WTC11 (cell line): ENCODE measurements at regions of chr11 and their contacts with region 1.

Region 1: DNA sequence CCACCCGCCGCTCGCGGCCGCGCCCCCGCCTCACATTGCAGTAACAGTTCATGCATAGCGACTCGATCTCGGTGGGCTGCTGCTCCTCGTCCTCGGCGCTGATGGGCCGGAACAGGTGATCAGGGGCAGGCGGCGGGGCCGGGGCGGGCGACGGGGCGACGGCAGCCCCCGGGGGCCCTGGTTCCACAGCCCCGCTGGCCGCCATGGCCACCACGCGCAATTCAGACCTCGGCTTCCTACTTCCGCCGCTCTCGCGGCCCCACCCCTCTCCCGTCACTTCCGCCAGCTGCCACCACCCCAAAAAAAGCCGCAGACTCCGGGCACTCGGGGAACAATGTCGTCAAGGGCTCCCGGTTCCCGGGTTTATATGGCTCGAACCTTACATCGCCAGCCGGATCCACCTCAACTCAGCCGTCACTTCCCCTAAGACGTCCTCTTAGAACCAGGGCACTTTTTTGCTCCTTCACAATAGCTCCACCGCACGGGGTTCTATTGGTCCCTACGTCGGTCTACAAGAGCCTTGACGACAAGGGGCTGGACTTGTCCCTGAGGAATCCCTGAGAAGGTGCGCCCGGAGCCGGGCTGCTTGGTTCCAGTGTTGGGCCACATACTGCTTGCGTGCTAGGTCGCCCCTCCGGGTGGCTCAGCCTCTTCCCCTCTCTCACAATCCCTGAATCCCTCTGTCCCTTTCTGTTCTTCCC is at the start of gene ZPR1:
- DNase-seq: peak; percentile 72
- ATAC-seq: peak; percentile 66
- H3K4me3 Mint-ChIP-seq: peak within 1 kb of the TSS; percentile 94
- H3K27ac Mint-ChIP-seq: peak within 1 kb of the TSS; percentile 61
- H3K4me1 Mint-ChIP-seq: peaks cover 22% of the 10 kb centered on the region
- H3K27me3 Mint-ChIP-seq: peaks cover 23% of the 10 kb centered on the region
- CTCF ChIP-seq: no peak
- total RNA-seq, gene ZPR1: 55.2 to 59.6 TPM (median 56.6 TPM) in 3 replicates

Region 2: DNA sequence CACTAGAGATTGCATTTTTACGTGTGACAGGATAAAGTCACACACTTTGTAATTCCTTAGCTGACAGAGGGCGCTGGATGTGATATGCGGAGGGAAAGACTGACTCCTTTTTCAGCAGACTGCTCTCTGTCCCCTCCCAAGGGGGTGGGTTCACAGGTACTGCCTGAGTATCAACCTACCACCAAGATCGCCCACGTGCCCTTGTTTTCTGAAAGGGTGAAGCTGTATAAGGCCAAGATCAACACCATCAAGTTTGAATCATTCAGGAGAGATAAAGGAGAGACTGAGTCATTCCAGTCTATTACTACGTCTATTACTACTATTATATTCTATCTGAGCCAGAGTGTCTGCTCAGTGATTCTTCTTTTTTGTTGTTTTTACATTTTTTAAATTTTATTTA is 45.8 kb before region 1 on chr11:
- CTCF ChIA-PET with region 1: interaction called, 10 read pairs
- POLR2A ChIA-PET with region 1: no interaction called
- DNase-seq: no peak
- ATAC-seq: peak; percentile 56
- H3K4me3 Mint-ChIP-seq: no peak overlapping the region
- H3K27ac Mint-ChIP-seq: peak overlapping the region; percentile 86
- H3K4me1 Mint-ChIP-seq: peaks cover 32% of the 10 kb centered on the region
- H3K27me3 Mint-ChIP-seq: no peaks in the 10 kb centered on the region
- CTCF ChIP-seq: no peak

Region 3: DNA sequence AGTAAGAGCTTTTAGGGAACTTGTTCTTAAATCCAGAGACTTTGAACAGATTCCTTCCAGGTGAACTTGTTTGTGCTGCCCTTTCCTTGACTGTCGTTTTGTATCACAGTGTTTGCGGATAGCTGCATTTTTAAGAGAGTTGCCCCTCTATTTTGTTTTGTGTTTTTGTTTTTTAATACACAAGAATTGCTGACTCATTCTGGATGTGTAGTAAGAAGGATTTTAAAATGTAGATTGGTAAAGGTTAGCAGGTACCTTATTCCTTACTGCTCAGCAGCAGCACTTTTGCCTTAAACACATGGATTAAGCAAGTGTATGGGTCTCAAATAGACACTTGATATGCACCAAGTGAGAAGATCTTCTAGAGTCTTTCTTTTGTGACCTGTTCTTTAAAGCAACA is 12.7 kb after region 1 on chr11:
- CTCF ChIA-PET with region 1: interaction called, 14 read pairs
- POLR2A ChIA-PET with region 1: no interaction called
- DNase-seq: no peak
- ATAC-seq: no peak
- H3K4me3 Mint-ChIP-seq: no peak overlapping the region
- H3K27ac Mint-ChIP-seq: no peak overlapping the region
- H3K4me1 Mint-ChIP-seq: no peaks in the 10 kb centered on the region
- H3K27me3 Mint-ChIP-seq: no peaks in the 10 kb centered on the region; the same call in 1 of the 2 replicates
- CTCF ChIP-seq: no peak

Region 4: GRCh38 chr11:116821050-116821918 is 33.3 kb after region 1 on chr11:
- CTCF ChIA-PET with region 1: interaction called, 21 read pairs
- POLR2A ChIA-PET with region 1: interaction called, 3 read pairs
- DNase-seq: no peak
- ATAC-seq: no peak
- H3K4me3 Mint-ChIP-seq: no peak overlapping the region
- H3K27ac Mint-ChIP-seq: no peak overlapping the region
- H3K4me1 Mint-ChIP-seq: no peaks in the 10 kb centered on the region
- H3K27me3 Mint-ChIP-seq: no peaks in the 10 kb centered on the region
- CTCF ChIP-seq: no peak

Region 5: DNA sequence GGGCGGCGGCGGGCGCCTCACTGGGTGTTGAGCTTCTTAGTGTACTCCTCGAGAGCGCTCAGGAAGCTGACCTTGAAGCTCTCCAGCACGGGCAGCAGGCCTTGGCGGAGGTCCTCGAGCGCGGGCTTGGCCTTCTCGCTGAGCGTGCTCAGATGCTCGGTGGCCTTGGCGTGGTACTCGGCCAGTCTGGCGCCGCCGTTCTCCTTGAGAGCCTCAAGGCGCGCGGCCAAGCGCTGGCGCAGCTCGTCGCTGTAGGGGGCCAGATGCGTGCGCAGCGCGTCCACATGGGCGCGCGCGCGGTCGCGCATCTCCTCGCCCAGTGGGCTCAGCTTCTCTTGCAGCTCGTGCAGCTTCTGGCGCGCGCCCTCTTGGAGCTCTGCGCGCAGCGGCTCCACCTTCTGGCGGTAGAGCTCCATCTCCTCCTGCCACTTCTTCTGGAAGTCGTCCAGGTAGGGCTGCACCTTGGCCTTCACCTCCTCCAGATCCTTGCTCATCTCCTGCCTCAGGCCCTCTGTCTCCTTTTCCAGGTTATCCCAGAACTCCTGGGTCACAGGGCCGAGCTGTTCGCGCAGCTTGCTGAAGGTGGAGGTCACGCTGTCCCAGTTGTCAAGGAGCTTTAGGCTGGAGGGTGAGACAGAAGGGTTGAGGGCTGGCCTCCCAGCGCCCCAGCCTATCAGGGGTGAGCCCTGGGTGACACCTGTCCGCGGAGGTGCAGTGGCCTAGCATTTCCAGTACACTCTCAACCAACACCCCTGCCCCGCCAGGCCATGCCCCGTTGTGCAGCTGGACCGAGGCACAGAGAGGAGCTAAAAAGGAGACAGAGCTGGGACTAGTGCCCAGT is 48.1 kb after region 1 on chr11:
- CTCF ChIA-PET with region 1: interaction called, 358 read pairs
- POLR2A ChIA-PET with region 1: interaction called, 8 read pairs
- DNase-seq: peak; percentile 88
- ATAC-seq: peak; percentile 83
- H3K4me3 Mint-ChIP-seq: peak overlapping the region; percentile 59
- H3K27ac Mint-ChIP-seq: no peak overlapping the region
- H3K4me1 Mint-ChIP-seq: peaks cover 19% of the 10 kb centered on the region
- H3K27me3 Mint-ChIP-seq: peaks cover 11% of the 10 kb centered on the region
- CTCF ChIP-seq: peak; percentile 12; the same call in 1 of the 2 replicates

Region 6: GRCh38 chr11:116946410-116946809 is 158.5 kb after region 1 on chr11:
- CTCF ChIA-PET with region 1: no interaction called
- POLR2A ChIA-PET with region 1: no interaction called
- DNase-seq: no peak
- ATAC-seq: no peak
- H3K4me3 Mint-ChIP-seq: no peak overlapping the region
- H3K27ac Mint-ChIP-seq: peak overlapping the region; percentile 38; the same call in 1 of the 2 replicates
- H3K4me1 Mint-ChIP-seq: peaks cover 10% of the 10 kb centered on the region
- H3K27me3 Mint-ChIP-seq: no peaks in the 10 kb centered on the region
- CTCF ChIP-seq: no peak

Region 7: DNA sequence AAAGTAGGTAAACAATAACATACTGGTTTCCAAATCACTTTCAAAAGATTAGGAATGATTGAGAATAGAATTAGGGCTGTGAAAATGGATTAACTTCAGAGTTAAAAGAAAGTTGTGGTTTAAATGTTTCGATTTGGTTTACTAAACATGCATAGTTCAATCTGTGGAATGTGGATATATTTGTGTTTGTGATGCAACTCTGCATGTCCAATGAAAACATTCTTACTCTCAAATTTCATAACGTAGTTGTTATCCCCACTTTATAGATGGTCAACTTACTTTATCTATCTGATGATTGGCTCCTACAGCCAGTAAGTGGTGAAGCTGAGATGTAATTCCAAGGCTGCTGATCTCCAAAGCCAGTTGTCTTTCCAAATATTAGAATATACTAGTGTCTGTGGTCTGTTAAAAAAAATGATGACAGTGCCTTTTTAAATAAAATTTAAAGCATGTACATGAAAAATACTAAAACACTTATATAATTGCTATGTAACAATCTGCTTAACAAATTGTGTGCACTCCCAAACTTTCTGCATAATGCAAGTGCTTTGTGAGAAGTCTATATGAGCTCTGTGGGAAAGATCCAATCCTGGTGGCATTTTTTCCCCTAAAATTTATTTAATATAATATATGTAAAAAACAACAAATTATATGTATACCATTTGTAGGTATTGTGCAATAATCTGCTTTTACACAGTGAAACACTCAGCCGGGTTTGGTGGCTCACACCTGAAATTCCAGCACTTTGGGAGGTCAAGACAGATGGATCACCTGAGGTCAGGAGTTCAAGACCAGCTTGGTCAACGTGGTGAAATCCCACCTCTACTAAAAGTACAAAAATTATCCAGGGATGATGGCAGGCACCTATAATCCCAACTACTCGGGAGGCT is 320.0 kb after region 1 on chr11:
- CTCF ChIA-PET with region 1: interaction called, 26 read pairs
- POLR2A ChIA-PET with region 1: no interaction called
- DNase-seq: no peak
- ATAC-seq: no peak
- H3K4me3 Mint-ChIP-seq: no peak overlapping the region
- H3K27ac Mint-ChIP-seq: no peak overlapping the region
- H3K4me1 Mint-ChIP-seq: no peaks in the 10 kb centered on the region
- H3K27me3 Mint-ChIP-seq: no peaks in the 10 kb centered on the region
- CTCF ChIP-seq: no peak

Region 8: GRCh38 chr11:117178210-117179034 is 390.5 kb after region 1 on chr11 and contains the start of gene SIDT2:
- CTCF ChIA-PET with region 1: interaction called, 19 read pairs
- POLR2A ChIA-PET with region 1: no interaction called
- DNase-seq: peak; percentile 94
- ATAC-seq: peak; percentile 87
- H3K4me3 Mint-ChIP-seq: peak within 1 kb of the TSS; percentile 92
- H3K27ac Mint-ChIP-seq: peak within 1 kb of the TSS; percentile 95
- H3K4me1 Mint-ChIP-seq: peaks cover 26% of the 10 kb centered on the region
- H3K27me3 Mint-ChIP-seq: peaks cover 6% of the 10 kb centered on the region
- CTCF ChIP-seq: no peak
- total RNA-seq, gene SIDT2: 20.7 to 27.6 TPM (median 20.9 TPM) in 3 replicates